Heart left ventricle (tissue), 16 donors: ENCODE measurements at regions of chr11 and their contacts with region 1.

Region 1: GRCh38 chr11:19712281-19713220 is at the start of gene NAV2:
- DNase-seq: peak; percentile 94 to 96 (median 95)
- ATAC-seq: peak; percentile 84 to 96 (median 92)
- H3K4me3 ChIP-seq: peak within 1 kb of the TSS; percentile 52 to 89 (median 72)
- H3K27ac ChIP-seq: peak within 1 kb of the TSS; percentile 75 to 98 (median 94)
- H3K4me1 ChIP-seq: peaks cover 0 to 50% (median 36%) of the 10 kb centered on the region in 12 donors
- H3K27me3 ChIP-seq: peaks cover 0 to 30% (median 0%) of the 10 kb centered on the region in 9 donors
- CTCF ChIP-seq: peak in 4 of 12 donors; percentile 2 to 12 (median 10)
- POLR2A ChIP-seq: peak; percentile 77 to 99
- total RNA-seq, gene NAV2: 12.3 to 46.5 (median 25.4) TPM

Region 2: GRCh38 chr11:19577976-19578619 is 134.5 kb before region 1 on chr11:
- intact Hi-C with region 1: loop called in 5 of 10 experiments (anchors 2 to 10 kb)
- DNase-seq: peak in 4 of 5 donors; percentile 48 to 73 (median 62)
- ATAC-seq: peak; percentile 56 to 71 (median 69)
- H3K4me3 ChIP-seq: peak overlapping the region in 4 of 12 donors; percentile 3 to 15 (median 8)
- H3K27ac ChIP-seq: peak overlapping the region; percentile 72 to 92 (median 88)
- H3K4me1 ChIP-seq: peaks cover 10 to 63% (median 36%) of the 10 kb centered on the region in 12 donors
- H3K27me3 ChIP-seq: no peaks in the 10 kb centered on the region
- CTCF ChIP-seq: no peak
- POLR2A ChIP-seq: no peak

Region 3: DNA sequence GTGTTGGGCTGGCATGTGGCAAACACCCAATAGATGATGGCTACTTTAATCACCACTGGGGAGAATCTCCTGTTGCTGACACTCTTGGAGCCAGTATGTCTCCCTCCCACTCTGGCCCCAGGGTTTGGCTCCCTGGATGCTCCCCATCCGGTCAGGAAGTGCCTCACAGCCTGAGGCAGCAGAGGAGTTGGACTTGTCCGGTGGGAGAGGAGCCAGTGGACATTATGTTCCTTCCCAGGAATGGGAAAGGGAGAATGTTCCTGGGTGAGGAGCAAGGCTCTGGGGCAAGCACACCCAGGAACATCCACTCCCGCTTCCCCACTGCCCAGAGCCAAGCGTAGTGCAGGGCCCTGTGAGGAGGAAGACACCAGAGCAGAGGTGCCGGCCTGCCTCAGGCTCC is 84.5 kb before region 1 on chr11:
- intact Hi-C with region 1: loop called in 1 of 10 experiments (anchors 2 kb)
- DNase-seq: peak; percentile 43 to 85 (median 64)
- ATAC-seq: peak; percentile 94 to 97 (median 96)
- H3K4me3 ChIP-seq: no peak overlapping the region
- H3K27ac ChIP-seq: peak overlapping the region; percentile 7 to 84 (median 57)
- H3K4me1 ChIP-seq: peaks cover 0 to 36% (median 23%) of the 10 kb centered on the region in 12 donors
- H3K27me3 ChIP-seq: no peaks in the 10 kb centered on the region
- CTCF ChIP-seq: no peak
- POLR2A ChIP-seq: no peak

Region 4: DNA sequence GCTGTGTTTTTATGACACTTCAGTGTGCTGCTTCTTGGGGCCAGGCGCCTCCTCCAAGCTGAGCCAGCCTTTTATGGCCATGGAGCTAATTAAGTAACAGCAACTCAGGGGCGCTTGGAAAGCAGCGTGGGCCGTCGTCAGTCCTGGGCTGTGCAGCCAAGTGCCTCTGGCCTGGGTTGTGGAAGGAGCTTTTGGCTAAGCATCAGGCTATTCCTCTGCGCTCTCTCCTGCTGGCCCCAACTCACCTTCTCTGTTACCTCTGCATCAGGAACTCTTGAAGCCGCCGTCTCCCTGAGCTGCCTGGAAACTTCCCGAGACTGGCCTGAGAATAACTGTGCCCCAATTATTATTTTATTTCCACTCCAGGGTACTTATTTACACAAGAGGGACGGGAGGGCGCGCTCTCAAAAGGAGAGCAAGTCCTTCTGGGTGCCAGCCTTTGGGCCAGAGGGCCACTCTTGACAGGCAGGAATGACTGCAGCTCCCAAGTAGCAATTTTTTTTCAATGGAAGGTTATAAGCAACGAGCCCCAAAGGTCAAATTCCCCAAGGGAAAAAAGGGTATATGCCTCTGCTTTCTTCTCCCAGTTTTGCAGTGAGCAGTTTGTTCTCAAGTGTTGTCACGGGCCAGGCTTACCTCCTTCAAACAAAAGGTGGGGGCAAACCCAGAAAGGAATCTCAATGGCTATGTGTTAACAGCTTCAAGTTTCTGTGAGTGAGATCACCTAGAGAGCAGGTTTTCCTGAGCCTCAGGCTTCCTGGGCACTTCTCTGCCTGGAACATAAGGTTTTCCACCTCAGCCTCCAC is 38.4 kb before region 1 on chr11:
- intact Hi-C with region 1: loop called in 3 of 10 experiments (anchors 2 to 5 kb)
- DNase-seq: peak; percentile 73 to 90 (median 85)
- ATAC-seq: peak; percentile 85 to 91 (median 90)
- H3K4me3 ChIP-seq: no peak overlapping the region
- H3K27ac ChIP-seq: peak overlapping the region; percentile 73 to 93 (median 84)
- H3K4me1 ChIP-seq: peaks cover 0 to 69% (median 33%) of the 10 kb centered on the region in 12 donors
- H3K27me3 ChIP-seq: no peaks in the 10 kb centered on the region
- CTCF ChIP-seq: no peak
- POLR2A ChIP-seq: no peak

Region 5: DNA sequence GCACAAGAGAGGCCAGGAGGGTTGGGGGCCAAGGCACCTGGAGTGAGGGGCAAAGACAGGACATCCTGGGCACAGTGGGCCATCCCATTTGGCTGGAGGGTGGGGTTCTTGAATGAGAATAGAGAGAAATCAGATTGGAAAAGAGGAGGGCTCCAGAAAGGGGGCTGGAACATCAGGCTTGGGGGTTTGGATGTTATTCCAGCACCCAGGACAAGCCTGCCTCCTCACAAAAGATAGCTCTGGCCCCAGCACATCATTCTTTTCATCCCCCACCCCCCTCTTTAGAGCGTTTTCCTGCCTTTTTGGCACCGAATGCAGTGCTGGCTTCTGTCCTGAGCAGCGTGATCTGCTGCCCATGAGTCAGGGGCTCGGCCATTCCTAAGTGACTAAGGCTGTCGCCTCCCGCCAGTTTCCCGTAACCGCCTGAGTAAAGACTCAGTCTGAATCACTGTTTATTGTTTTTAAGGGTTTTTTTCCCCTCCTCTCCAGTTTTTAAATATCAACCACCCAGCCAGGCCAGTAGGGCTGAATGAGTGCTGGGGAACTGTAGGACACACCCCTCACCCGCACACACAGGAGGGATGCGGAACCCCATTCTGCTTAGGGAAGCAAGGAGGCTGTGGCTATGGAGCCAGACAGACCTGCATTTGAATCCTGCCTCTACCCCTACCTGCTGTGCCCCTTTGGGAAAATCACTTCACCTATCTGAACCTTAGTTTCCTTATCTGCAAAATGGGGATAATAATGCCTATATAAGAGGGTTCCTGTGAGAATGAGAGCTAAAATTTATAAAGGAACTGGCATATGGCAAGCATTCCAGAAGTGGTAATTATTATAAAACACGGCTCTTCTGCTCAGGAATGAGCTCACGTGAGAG is 32.4 kb before region 1 on chr11:
- intact Hi-C with region 1: loop called in 5 of 10 experiments (anchors 2 to 5 kb)
- DNase-seq: peak; percentile 83 to 94 (median 86)
- ATAC-seq: peak; percentile 32 to 85 (median 78)
- H3K4me3 ChIP-seq: no peak overlapping the region
- H3K27ac ChIP-seq: peak overlapping the region; percentile 43 to 88 (median 78)
- H3K4me1 ChIP-seq: peaks cover 2 to 87% (median 47%) of the 10 kb centered on the region in 12 donors
- H3K27me3 ChIP-seq: no peaks in the 10 kb centered on the region
- CTCF ChIP-seq: peak in 1 of 12 donors; percentile 19
- POLR2A ChIP-seq: no peak